Naive thymus-derived CD4-positive, alpha-beta T cell (primary cell): ENCODE measurements at regions of chr10 and their contacts with region 1.

Region 1: DNA sequence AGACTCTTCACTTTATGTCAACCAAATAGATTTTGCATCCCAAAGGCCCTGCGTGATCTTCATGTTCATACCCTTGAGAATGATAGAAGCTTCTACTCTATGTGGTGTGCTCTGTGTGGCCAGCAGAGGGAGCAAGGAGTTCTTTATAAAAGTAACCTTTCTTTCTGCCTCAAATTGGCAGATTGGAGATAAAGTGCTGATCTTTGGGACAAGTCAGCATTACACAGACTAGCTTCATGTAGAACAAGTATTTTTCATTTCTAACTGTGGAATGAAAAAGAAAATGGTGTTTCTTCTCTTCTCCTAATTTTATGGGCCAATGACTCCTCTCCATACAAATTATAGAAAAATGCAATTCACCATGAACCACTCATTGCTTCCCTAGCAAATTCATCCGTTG is 1214.1 kb downstream of the SORCS1 start:
- DNase-seq: peak in 5 of 9 donors; percentile 2 to 8 (median 5)
- ATAC-seq: no peak
- H3K4me3 ChIP-seq: no peak overlapping the region
- H3K4me3 Mint-ChIP-seq: no peak overlapping the region
- H3K27ac ChIP-seq: no peak overlapping the region
- H3K27ac Mint-ChIP-seq: no peak overlapping the region
- H3K4me1 ChIP-seq: no peaks in the 10 kb centered on the region
- H3K4me1 Mint-ChIP-seq: peaks cover 0 to 4% (median 0%) of the 10 kb centered on the region in 7 donors
- H3K27me3 ChIP-seq: no peaks in the 10 kb centered on the region
- H3K27me3 Mint-ChIP-seq: no peaks in the 10 kb centered on the region

Region 2: GRCh38 chr10:105756386-105756785 is 194.0 kb before region 1 on chr10:
- CTCF ChIA-PET with region 1: no interaction called
- POLR2A ChIA-PET with region 1: no interaction called
- intact Hi-C with region 1: no loop called
- DNase-seq: no peak
- ATAC-seq: no peak
- H3K4me3 ChIP-seq: no peak overlapping the region
- H3K4me3 Mint-ChIP-seq: no peak overlapping the region
- H3K27ac ChIP-seq: no peak overlapping the region
- H3K27ac Mint-ChIP-seq: no peak overlapping the region
- H3K4me1 ChIP-seq: no peaks in the 10 kb centered on the region
- H3K4me1 Mint-ChIP-seq: no peaks in the 10 kb centered on the region
- H3K27me3 ChIP-seq: no peaks in the 10 kb centered on the region
- H3K27me3 Mint-ChIP-seq: peaks cover 0 to 12% (median 2%) of the 10 kb centered on the region in 5 donors

Region 3: GRCh38 chr10:105974803-105975456 is 24.5 kb after region 1 on chr10:
- CTCF ChIA-PET with region 1: no interaction called
- POLR2A ChIA-PET with region 1: no interaction called
- intact Hi-C with region 1: loop called in 1 of 2 experiments (anchors 1 kb)
- DNase-seq: no peak
- ATAC-seq: no peak
- H3K4me3 ChIP-seq: no peak overlapping the region
- H3K4me3 Mint-ChIP-seq: peak overlapping the region in 2 of 10 donors; percentile 23 to 71
- H3K27ac ChIP-seq: no peak overlapping the region
- H3K27ac Mint-ChIP-seq: no peak overlapping the region
- H3K4me1 ChIP-seq: no peaks in the 10 kb centered on the region
- H3K4me1 Mint-ChIP-seq: peaks cover 0 to 11% (median 0%) of the 10 kb centered on the region in 7 donors
- H3K27me3 ChIP-seq: no peaks in the 10 kb centered on the region
- H3K27me3 Mint-ChIP-seq: peaks cover 0 to 8% (median 0%) of the 10 kb centered on the region in 5 donors

Region 4: GRCh38 chr10:106167946-106168345 is 217.5 kb after region 1 on chr10:
- CTCF ChIA-PET with region 1: no interaction called
- POLR2A ChIA-PET with region 1: no interaction called
- intact Hi-C with region 1: loop called in 1 of 2 experiments (anchors 5 kb)
- DNase-seq: no peak
- ATAC-seq: no peak
- H3K4me3 ChIP-seq: no peak overlapping the region
- H3K4me3 Mint-ChIP-seq: no peak overlapping the region
- H3K27ac ChIP-seq: no peak overlapping the region
- H3K27ac Mint-ChIP-seq: no peak overlapping the region
- H3K4me1 ChIP-seq: no peaks in the 10 kb centered on the region
- H3K4me1 Mint-ChIP-seq: no peaks in the 10 kb centered on the region
- H3K27me3 ChIP-seq: no peaks in the 10 kb centered on the region
- H3K27me3 Mint-ChIP-seq: peaks cover 0 to 4% (median 0%) of the 10 kb centered on the region in 5 donors

Region 5: DNA sequence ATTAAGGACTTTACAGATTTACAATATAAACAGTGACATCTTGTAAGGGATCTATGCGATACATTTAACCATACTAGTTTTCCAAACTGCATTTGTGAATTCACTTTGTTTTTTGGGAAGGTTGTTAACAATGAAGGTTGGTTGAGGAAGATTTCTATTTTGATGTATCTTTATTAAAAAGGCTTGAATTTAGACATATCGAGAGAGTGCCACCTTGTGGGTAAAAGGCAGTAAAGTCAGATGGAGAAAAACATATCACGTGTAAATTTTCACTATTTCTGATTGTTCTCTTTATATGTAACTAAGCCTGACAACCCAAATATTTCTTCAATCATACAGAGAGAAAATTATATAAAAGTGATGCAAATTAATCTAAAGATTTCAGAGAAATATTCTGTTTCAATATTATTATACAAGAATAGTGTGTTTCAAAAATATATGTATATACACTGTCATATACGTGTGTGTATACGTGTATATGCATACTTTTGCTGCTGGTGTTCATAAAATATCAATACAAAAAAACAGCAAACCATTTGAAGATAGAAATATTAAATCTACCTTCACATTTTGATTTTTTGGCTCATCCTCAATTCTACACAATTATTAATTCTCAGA is 225.5 kb after region 1 on chr10:
- CTCF ChIA-PET with region 1: no interaction called
- POLR2A ChIA-PET with region 1: no interaction called
- intact Hi-C with region 1: loop called in 1 of 2 experiments (anchors 5 kb)
- DNase-seq: no peak
- ATAC-seq: no peak
- H3K4me3 ChIP-seq: no peak overlapping the region
- H3K4me3 Mint-ChIP-seq: no peak overlapping the region
- H3K27ac ChIP-seq: no peak overlapping the region
- H3K27ac Mint-ChIP-seq: no peak overlapping the region
- H3K4me1 ChIP-seq: no peaks in the 10 kb centered on the region
- H3K4me1 Mint-ChIP-seq: no peaks in the 10 kb centered on the region
- H3K27me3 ChIP-seq: no peaks in the 10 kb centered on the region
- H3K27me3 Mint-ChIP-seq: peaks cover 0 to 6% (median 0%) of the 10 kb centered on the region in 5 donors